ENCODE measurements at regions of chr11 and their contacts with region 1.

Region 1: GRCh38 chr11:102177974-102178631 is 67.9 kb downstream of the YAP1 start:
- DNase-seq: peak in 1 of 2 experiments; percentile 76
- H3K4me3 ChIP-seq: no peak overlapping the region
- H3K4me3 Mint-ChIP-seq: no peak overlapping the region
- H3K27ac Mint-ChIP-seq: peak overlapping the region; percentile 63
- H3K4me1 ChIP-seq: peaks cover 26% of the 10 kb centered on the region
- H3K4me1 Mint-ChIP-seq: peaks cover 28% of the 10 kb centered on the region
- H3K27me3 ChIP-seq: no peaks in the 10 kb centered on the region
- H3K27me3 Mint-ChIP-seq: no peaks in the 10 kb centered on the region
- CTCF ChIP-seq: no peak

Region 2: GRCh38 chr11:102115557-102115956 is 62.5 kb before region 1 on chr11:
- CTCF ChIA-PET with region 1: no interaction called
- POLR2A ChIA-PET with region 1: no interaction called
- intact Hi-C with region 1: loop called (anchors 2 kb)
- DNase-seq: peak; percentile 78 to 84
- H3K4me3 ChIP-seq: no peak overlapping the region
- H3K4me3 Mint-ChIP-seq: peak overlapping the region; percentile 31
- H3K27ac Mint-ChIP-seq: peak overlapping the region; percentile 31
- H3K4me1 ChIP-seq: peaks cover 69% of the 10 kb centered on the region
- H3K4me1 Mint-ChIP-seq: peaks cover 54% of the 10 kb centered on the region
- H3K27me3 ChIP-seq: no peaks in the 10 kb centered on the region
- H3K27me3 Mint-ChIP-seq: no peaks in the 10 kb centered on the region
- CTCF ChIP-seq: no peak

Region 3: GRCh38 chr11:102157219-102157618 is 20.9 kb before region 1 on chr11:
- CTCF ChIA-PET with region 1: no interaction called
- POLR2A ChIA-PET with region 1: no interaction called
- intact Hi-C with region 1: loop called (anchors 1 kb)
- DNase-seq: peak in 1 of 2 experiments; percentile 32
- H3K4me3 ChIP-seq: no peak overlapping the region
- H3K4me3 Mint-ChIP-seq: no peak overlapping the region
- H3K27ac Mint-ChIP-seq: peak overlapping the region; percentile 13
- H3K4me1 ChIP-seq: peaks cover 42% of the 10 kb centered on the region
- H3K4me1 Mint-ChIP-seq: peaks cover 52% of the 10 kb centered on the region
- H3K27me3 ChIP-seq: no peaks in the 10 kb centered on the region
- H3K27me3 Mint-ChIP-seq: no peaks in the 10 kb centered on the region
- CTCF ChIP-seq: no peak

Region 4: DNA sequence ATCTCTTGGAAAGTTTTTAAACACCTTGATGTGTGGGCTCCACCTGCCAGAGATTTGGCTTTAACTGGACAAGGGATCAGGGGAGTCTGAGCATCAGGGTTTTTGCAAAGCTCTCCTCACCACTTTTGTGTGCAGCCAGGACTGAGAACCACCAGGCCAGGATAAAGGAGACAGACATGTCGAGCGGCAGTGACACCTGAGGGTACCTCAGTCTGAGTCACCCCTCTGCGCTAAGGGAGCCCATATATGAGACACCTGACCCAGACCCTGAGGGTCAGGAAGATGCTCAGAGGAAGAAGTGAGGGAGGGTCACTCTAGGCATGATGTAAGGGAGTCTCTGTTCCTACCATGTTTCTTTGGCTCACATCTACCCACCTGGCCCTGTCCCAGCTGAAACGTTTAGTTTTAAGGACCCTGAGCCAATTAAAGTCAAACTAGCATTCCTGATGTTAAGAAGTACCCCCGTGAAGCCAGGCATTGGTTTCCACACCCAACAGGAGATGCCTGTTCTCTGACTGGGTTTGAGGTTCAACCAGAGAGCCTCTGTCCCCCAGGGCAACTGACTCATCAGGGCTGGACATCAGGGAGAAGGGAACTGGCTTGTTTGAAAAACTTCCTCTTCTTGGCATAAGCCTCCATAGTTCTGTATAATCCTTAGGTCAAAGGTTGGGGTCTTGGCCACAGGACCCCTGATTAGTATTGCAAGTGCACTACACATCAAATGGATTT is 66.7 kb after region 1 on chr11:
- CTCF ChIA-PET with region 1: no interaction called
- POLR2A ChIA-PET with region 1: no interaction called
- intact Hi-C with region 1: no loop called
- DNase-seq: no peak
- H3K4me3 ChIP-seq: no peak overlapping the region
- H3K4me3 Mint-ChIP-seq: no peak overlapping the region
- H3K27ac Mint-ChIP-seq: no peak overlapping the region
- H3K4me1 ChIP-seq: no peaks in the 10 kb centered on the region
- H3K4me1 Mint-ChIP-seq: no peaks in the 10 kb centered on the region
- H3K27me3 ChIP-seq: no peaks in the 10 kb centered on the region
- H3K27me3 Mint-ChIP-seq: no peaks in the 10 kb centered on the region
- CTCF ChIP-seq: no peak